ENCODE measurements at regions of chr14 and their contacts with region 1.

Region 1: GRCh38 chr14:76784266-76785264 is 23.3 kb downstream of the VASH1 start:
- DNase-seq: peak; percentile 75
- ATAC-seq: peak; percentile 91
- H3K4me3 Mint-ChIP-seq: no peak overlapping the region
- H3K27ac Mint-ChIP-seq: no peak overlapping the region
- H3K4me1 Mint-ChIP-seq: peaks cover 24% of the 10 kb centered on the region
- H3K27me3 Mint-ChIP-seq: no peaks in the 10 kb centered on the region
- CTCF ChIP-seq: peak; percentile 74

Region 2: GRCh38 chr14:76736514-76736913 is 48.1 kb before region 1 on chr14:
- CTCF ChIA-PET with region 1: no interaction called
- POLR2A ChIA-PET with region 1: no interaction called
- intact Hi-C with region 1: no loop called
- DNase-seq: no peak
- ATAC-seq: no peak
- H3K4me3 Mint-ChIP-seq: no peak overlapping the region
- H3K27ac Mint-ChIP-seq: no peak overlapping the region
- H3K4me1 Mint-ChIP-seq: no peaks in the 10 kb centered on the region
- H3K27me3 Mint-ChIP-seq: peaks cover 9% of the 10 kb centered on the region
- CTCF ChIP-seq: no peak

Region 3: GRCh38 chr14:76767681-76768656 is 16.6 kb before region 1 on chr14:
- CTCF ChIA-PET with region 1: interaction called, 51 read pairs
- POLR2A ChIA-PET with region 1: interaction called, 5 read pairs
- intact Hi-C with region 1: no loop called
- DNase-seq: peak; percentile 79
- ATAC-seq: peak; percentile 99
- H3K4me3 Mint-ChIP-seq: no peak overlapping the region
- H3K27ac Mint-ChIP-seq: peak overlapping the region; percentile 59
- H3K4me1 Mint-ChIP-seq: peaks cover 15% of the 10 kb centered on the region
- H3K27me3 Mint-ChIP-seq: peaks cover 20% of the 10 kb centered on the region
- CTCF ChIP-seq: no peak

Region 4: GRCh38 chr14:76812211-76813044 is 27.9 kb after region 1 on chr14 and contains the start of gene ANGEL1:
- CTCF ChIA-PET with region 1: interaction called, 36 read pairs
- POLR2A ChIA-PET with region 1: interaction called, 6 read pairs
- intact Hi-C with region 1: no loop called
- DNase-seq: peak; percentile 97
- ATAC-seq: peak; percentile 91
- H3K4me3 Mint-ChIP-seq: peak within 1 kb of the TSS; percentile 86
- H3K27ac Mint-ChIP-seq: peak within 1 kb of the TSS; percentile 84
- H3K4me1 Mint-ChIP-seq: peaks cover 23% of the 10 kb centered on the region
- H3K27me3 Mint-ChIP-seq: no peaks in the 10 kb centered on the region
- CTCF ChIP-seq: no peak
- total RNA-seq, gene ANGEL1: 16.5 to 21.5 TPM

Measured in activated CD8-positive, alpha-beta T cell treated with anti-CD3 and anti-CD28 coated beads for 36 hours (primary cell).